Adrenal gland (tissue), 19 donors: ENCODE measurements at regions of chr9 and their contacts with region 1.

Region 1: DNA sequence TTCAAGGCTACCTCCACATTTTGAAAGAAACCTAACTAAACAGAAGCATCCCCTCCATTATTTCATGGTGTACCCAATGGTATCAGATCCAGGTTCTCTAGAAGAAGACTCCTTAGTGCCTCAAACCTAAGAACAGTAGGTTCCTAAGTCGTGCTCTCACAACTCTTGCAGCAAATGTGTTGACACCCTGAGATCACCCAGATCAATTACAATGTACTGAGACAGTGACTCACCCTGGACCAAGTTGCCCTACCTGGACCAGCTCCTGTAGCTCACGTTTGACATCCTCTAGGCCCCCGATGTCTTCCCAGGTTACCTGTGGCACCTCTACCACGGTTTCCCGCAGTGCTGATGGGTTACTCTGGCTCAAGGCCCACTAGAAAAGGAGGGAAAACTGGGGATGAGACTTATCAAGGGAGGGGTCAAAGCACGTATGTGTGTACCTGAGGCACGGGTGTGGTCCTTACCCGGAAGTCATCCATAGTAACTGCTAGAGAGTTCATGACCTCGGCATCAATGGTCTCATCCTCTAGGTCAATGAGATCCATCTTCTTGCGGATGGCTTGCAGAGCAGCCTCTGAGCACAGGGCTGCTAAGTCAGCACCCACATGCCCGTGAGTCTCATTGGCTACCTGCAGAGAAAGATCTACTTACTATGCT is 11.7 kb downstream of the VCP start:
- DNase-seq: no peak
- H3K4me3 ChIP-seq: no peak overlapping the region
- H3K27ac ChIP-seq: no peak overlapping the region
- H3K4me1 ChIP-seq: no peaks in the 10 kb centered on the region
- H3K27me3 ChIP-seq: no peaks in the 10 kb centered on the region
- CTCF ChIP-seq: no peak
- POLR2A ChIP-seq: no peak

Region 2: GRCh38 chr9:34984049-34984448 is 76.6 kb before region 1 on chr9:
- intact Hi-C with region 1: no loop called
- DNase-seq: peak in 3 of 7 donors; percentile 33 to 40 (median 36)
- H3K4me3 ChIP-seq: no peak overlapping the region
- H3K27ac ChIP-seq: no peak overlapping the region
- H3K4me1 ChIP-seq: peaks cover 0 to 5% of the 10 kb centered on the region in 2 donors
- H3K27me3 ChIP-seq: no peaks in the 10 kb centered on the region
- CTCF ChIP-seq: no peak
- POLR2A ChIP-seq: no peak

Region 3: GRCh38 chr9:34994260-34994899 is 66.3 kb before region 1 on chr9:
- intact Hi-C with region 1: loop called in 1 of 2 experiments (anchors 10 kb)
- DNase-seq: peak in 5 of 7 donors; percentile 37 to 85 (median 47)
- H3K4me3 ChIP-seq: no peak overlapping the region
- H3K27ac ChIP-seq: peak overlapping the region; percentile 54 to 95 (median 70)
- H3K4me1 ChIP-seq: peaks cover 35 to 57% of the 10 kb centered on the region in 2 donors
- H3K27me3 ChIP-seq: no peaks in the 10 kb centered on the region
- CTCF ChIP-seq: peak; percentile 24 to 65 (median 52)
- POLR2A ChIP-seq: no peak

Region 4: GRCh38 chr9:35267710-35268109 is 207.0 kb after region 1 on chr9:
- intact Hi-C with region 1: no loop called
- DNase-seq: no peak
- H3K4me3 ChIP-seq: no peak overlapping the region
- H3K27ac ChIP-seq: no peak overlapping the region
- H3K4me1 ChIP-seq: no peaks in the 10 kb centered on the region
- H3K27me3 ChIP-seq: no peaks in the 10 kb centered on the region
- CTCF ChIP-seq: no peak
- POLR2A ChIP-seq: no peak